MCF 10A (cell line): ENCODE measurements at regions of chr1 and their contacts with region 1.

Region 1: DNA sequence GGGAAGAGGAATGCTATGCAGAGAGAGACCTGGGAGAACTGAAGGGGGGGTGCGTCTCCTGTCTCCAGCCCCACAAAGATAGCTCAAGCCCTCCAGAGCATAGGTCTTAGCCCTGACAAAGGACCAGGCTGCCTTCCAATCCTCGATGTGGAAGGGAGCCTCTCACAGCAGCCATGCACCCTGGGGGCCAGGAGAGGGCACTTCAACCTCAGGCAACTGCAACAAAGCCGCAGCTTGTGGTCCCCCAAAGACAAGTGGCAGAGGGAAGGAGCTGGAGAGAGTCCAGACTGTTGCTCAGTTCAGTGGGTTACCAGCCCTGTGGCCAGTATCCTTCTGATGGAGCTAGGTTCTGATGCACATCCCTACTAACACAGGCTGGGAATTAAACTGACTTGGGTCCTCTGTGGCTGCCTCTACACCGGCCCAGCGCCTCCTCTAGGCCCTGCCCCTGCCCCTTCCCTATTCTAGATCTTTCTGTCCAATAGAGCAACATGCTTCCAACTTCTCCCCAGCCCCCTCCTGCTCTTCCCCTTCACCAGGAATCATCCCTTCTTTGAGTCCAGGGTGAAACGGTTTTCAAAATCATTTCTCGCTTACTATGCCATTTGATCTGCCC is 100.8 kb upstream of the SPATA6 start:
- DNase-seq: peak; percentile 62
- H3K4me3 Mint-ChIP-seq: no peak overlapping the region
- H3K27ac Mint-ChIP-seq: no peak overlapping the region
- H3K4me1 Mint-ChIP-seq: peaks cover 7% of the 10 kb centered on the region
- H3K27me3 Mint-ChIP-seq: peaks cover 11% of the 10 kb centered on the region
- CTCF ChIP-seq: peak; percentile 75

Region 2: DNA sequence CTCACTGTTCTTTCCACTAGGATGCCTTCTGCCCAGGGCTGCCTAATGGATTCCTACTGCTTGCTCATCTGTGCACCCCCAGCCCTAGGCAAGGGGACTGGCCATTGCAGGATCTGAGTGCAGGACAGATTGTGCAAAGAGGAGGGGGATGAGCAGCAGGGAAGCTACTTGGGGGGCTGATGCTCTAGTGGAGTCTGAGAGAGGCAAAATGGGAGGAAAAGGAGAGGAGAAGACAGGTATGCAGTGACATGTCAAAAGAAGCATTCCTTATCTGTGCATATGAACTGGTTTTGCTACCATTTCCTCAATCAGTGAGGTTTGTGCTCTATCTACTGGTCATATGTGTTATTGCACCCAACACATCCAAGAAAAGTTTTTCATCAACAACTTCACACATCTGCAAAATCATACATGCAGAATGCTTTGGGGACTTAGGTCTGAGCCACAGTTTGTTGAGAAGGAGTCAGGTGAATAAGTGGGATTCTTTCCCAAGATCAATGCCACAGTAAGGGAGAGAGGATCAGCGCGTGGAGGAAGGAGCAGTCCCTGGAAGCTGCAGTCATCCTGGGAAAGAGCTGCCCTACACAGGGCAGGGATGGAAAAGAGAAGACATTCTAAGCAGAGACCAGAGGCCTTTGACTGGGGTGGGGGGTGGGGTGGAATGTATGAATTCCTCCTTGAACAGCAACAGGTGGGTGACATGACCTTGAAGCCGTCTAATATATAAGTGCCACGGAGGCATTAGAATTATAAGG is 335.9 kb before region 1 on chr1:
- CTCF ChIA-PET with region 1: no interaction called
- POLR2A ChIA-PET with region 1: no interaction called
- intact Hi-C with region 1: no loop called
- DNase-seq: peak; percentile 43
- H3K4me3 Mint-ChIP-seq: no peak overlapping the region
- H3K27ac Mint-ChIP-seq: no peak overlapping the region
- H3K4me1 Mint-ChIP-seq: no peaks in the 10 kb centered on the region
- H3K27me3 Mint-ChIP-seq: no peaks in the 10 kb centered on the region
- CTCF ChIP-seq: peak; percentile 74

Region 3: GRCh38 chr1:48506870-48507269 is 65.9 kb before region 1 on chr1:
- CTCF ChIA-PET with region 1: no interaction called
- POLR2A ChIA-PET with region 1: no interaction called
- intact Hi-C with region 1: no loop called
- DNase-seq: no peak
- H3K4me3 Mint-ChIP-seq: no peak overlapping the region
- H3K27ac Mint-ChIP-seq: no peak overlapping the region
- H3K4me1 Mint-ChIP-seq: no peaks in the 10 kb centered on the region
- H3K27me3 Mint-ChIP-seq: peaks cover 17% of the 10 kb centered on the region
- CTCF ChIP-seq: no peak

Region 4: GRCh38 chr1:48560577-48560976 is 12.2 kb before region 1 on chr1:
- CTCF ChIA-PET with region 1: interaction called, 16 read pairs
- POLR2A ChIA-PET with region 1: no interaction called
- intact Hi-C with region 1: no loop called
- DNase-seq: no peak
- H3K4me3 Mint-ChIP-seq: no peak overlapping the region
- H3K27ac Mint-ChIP-seq: no peak overlapping the region
- H3K4me1 Mint-ChIP-seq: peaks cover 22% of the 10 kb centered on the region
- H3K27me3 Mint-ChIP-seq: no peaks in the 10 kb centered on the region
- CTCF ChIP-seq: no peak

Region 5: DNA sequence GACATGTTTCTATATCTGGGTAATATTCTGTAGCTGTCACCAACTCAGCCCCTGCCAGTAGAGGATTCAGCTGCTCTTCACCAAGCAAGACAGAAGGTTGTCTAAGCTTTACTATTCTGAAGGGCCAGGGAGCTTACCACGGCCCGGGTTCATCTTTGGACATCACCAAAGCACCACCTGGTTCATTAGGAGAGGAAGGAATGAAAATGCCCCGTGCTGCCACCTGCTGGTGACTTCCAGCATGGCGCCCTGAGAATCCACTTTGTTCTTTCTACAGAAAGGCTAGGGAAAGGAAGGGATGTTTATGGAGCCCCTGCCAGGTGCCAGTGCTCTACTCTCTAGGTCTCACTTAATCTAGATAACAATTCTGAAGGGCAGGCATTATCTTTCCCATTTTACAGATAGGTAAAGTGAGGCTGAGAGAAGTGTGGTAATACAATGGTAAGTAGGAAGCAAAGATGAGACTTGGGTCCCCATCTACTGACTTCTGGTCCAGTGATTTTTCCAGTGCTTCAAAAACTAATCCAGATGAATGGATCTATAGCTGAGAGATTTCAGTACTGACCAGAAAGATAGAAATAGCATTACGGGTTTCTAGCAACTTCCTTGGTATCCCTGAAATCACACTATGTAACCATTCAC is 124.4 kb after region 1 on chr1:
- CTCF ChIA-PET with region 1: interaction called, 58 read pairs
- POLR2A ChIA-PET with region 1: no interaction called
- intact Hi-C with region 1: loop called (anchors 1 kb)
- DNase-seq: peak; percentile 68
- H3K4me3 Mint-ChIP-seq: no peak overlapping the region
- H3K27ac Mint-ChIP-seq: no peak overlapping the region
- H3K4me1 Mint-ChIP-seq: peaks cover 10% of the 10 kb centered on the region
- H3K27me3 Mint-ChIP-seq: peaks cover 16% of the 10 kb centered on the region
- CTCF ChIP-seq: peak; percentile 81

Region 6: GRCh38 chr1:48817505-48818114 is 244.9 kb after region 1 on chr1:
- CTCF ChIA-PET with region 1: interaction called, 23 read pairs
- POLR2A ChIA-PET with region 1: no interaction called
- intact Hi-C with region 1: loop called (anchors 2 kb)
- DNase-seq: peak; percentile 72
- H3K4me3 Mint-ChIP-seq: no peak overlapping the region
- H3K27ac Mint-ChIP-seq: no peak overlapping the region
- H3K4me1 Mint-ChIP-seq: no peaks in the 10 kb centered on the region
- H3K27me3 Mint-ChIP-seq: no peaks in the 10 kb centered on the region
- CTCF ChIP-seq: peak; percentile 62

Region 7: DNA sequence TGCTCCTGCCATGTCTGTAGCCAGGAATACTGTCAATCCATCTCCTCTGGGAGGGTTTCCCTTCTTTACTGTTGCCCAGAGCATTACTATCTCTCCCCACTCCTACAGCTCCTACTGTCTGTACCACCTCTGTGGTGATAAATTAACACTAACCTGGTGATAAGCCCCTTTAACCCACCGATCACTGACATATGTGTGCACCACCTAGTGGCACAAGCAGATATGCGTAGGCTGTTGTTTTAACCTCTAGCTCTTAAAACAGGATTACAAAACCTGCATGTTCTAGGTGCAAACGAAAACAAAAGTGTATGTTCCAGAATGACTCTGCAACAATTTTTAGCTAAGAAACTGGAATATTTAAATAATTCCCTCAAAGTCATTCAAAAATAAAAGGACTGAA is 297.8 kb after region 1 on chr1:
- CTCF ChIA-PET with region 1: interaction called, 8 read pairs
- POLR2A ChIA-PET with region 1: no interaction called
- intact Hi-C with region 1: loop called (anchors 2 kb)
- DNase-seq: peak; percentile 65
- H3K4me3 Mint-ChIP-seq: no peak overlapping the region
- H3K27ac Mint-ChIP-seq: peak overlapping the region; percentile 15
- H3K4me1 Mint-ChIP-seq: peaks cover 22% of the 10 kb centered on the region
- H3K27me3 Mint-ChIP-seq: no peaks in the 10 kb centered on the region
- CTCF ChIP-seq: peak; percentile 32